ENCODE measurements at regions of chr1 and their contacts with region 1.

Region 1: DNA sequence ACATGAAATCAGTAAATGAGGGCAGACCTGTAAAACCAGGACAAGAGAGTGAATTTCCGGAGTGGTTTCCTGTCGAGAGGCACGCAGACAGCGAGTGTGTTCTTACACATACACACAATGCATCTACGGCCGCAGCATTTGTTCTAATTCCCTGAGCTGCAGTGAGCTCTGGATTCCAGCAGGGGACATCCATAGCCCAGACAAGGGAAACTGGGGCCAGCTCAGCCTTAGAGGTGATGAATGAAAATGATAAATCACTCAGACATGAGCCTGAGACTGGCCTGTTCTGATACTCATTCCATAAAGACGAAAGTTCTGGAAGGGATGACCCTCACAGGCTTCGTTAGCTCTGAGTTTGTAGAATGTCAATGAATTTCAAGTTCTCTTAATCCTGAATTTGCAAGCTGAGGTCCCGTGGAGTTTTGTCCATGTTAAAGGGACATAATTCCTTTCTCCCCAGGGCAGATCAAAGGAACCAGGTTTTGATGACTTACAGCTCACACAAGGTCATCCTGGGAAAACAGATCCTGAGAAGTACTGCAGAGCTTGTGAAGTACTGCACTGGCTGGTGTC is 207.9 kb upstream of the C1orf87 start:
- DNase-seq: peak; percentile 79
- H3K4me3 ChIP-seq: peak overlapping the region in 1 of 2 experiments; percentile 24; a peak in 1 of 4 replicates
- H3K27ac ChIP-seq: peak overlapping the region; percentile 61 to 98; a peak in 3 of 4 replicates
- H3K4me1 ChIP-seq: peaks cover 20 to 21% of the 10 kb centered on the region in 2 experiments
- H3K27me3 ChIP-seq: no peaks in the 10 kb centered on the region
- CTCF ChIP-seq: peak; percentile 92
- EP300 ChIP-seq: peak; percentile 17 to 64; a peak in 3 of 4 replicates
- RAD21 ChIP-seq: peak; percentile 98

Region 2: GRCh38 chr1:60156371-60156770 is 125.1 kb before region 1 on chr1:
- CTCF ChIA-PET with region 1: interaction called, 26 read pairs
- POLR2A ChIA-PET with region 1: no interaction called
- DNase-seq: no peak
- H3K4me3 ChIP-seq: no peak overlapping the region
- H3K27ac ChIP-seq: no peak overlapping the region
- H3K4me1 ChIP-seq: peaks cover 0 to 3% of the 10 kb centered on the region in 2 experiments; a peak in 2 of 4 replicates
- H3K27me3 ChIP-seq: no peaks in the 10 kb centered on the region
- CTCF ChIP-seq: no peak
- EP300 ChIP-seq: no peak
- RAD21 ChIP-seq: no peak

Region 3: GRCh38 chr1:60510162-60510561 is 228.7 kb after region 1 on chr1:
- CTCF ChIA-PET with region 1: no interaction called
- POLR2A ChIA-PET with region 1: no interaction called
- DNase-seq: no peak
- H3K4me3 ChIP-seq: no peak overlapping the region
- H3K27ac ChIP-seq: no peak overlapping the region
- H3K4me1 ChIP-seq: no peaks in the 10 kb centered on the region
- H3K27me3 ChIP-seq: no peaks in the 10 kb centered on the region
- CTCF ChIP-seq: no peak
- EP300 ChIP-seq: no peak
- RAD21 ChIP-seq: no peak

Region 4: GRCh38 chr1:60564916-60565750 is 283.7 kb after region 1 on chr1:
- CTCF ChIA-PET with region 1: interaction called, 18 read pairs
- POLR2A ChIA-PET with region 1: no interaction called
- DNase-seq: no peak
- H3K4me3 ChIP-seq: no peak overlapping the region
- H3K27ac ChIP-seq: peak overlapping the region in 1 of 2 experiments; percentile 83; a peak in 2 of 4 replicates
- H3K4me1 ChIP-seq: peaks cover 0 to 6% of the 10 kb centered on the region in 2 experiments; a peak in 2 of 4 replicates
- H3K27me3 ChIP-seq: no peaks in the 10 kb centered on the region
- CTCF ChIP-seq: no peak
- EP300 ChIP-seq: no peak
- RAD21 ChIP-seq: peak; percentile 65

Region 5: GRCh38 chr1:60765204-60765603 is 483.8 kb after region 1 on chr1:
- CTCF ChIA-PET with region 1: interaction called, 24 read pairs
- POLR2A ChIA-PET with region 1: interaction called, 6 read pairs
- DNase-seq: peak; percentile 32
- H3K4me3 ChIP-seq: no peak overlapping the region; a peak in 1 of 4 replicates
- H3K27ac ChIP-seq: no peak overlapping the region
- H3K4me1 ChIP-seq: peaks cover 0 to 3% of the 10 kb centered on the region in 2 experiments; a peak in 2 of 4 replicates
- H3K27me3 ChIP-seq: no peaks in the 10 kb centered on the region
- CTCF ChIP-seq: peak; percentile 64
- EP300 ChIP-seq: no peak
- RAD21 ChIP-seq: peak; percentile 82

Region 6: DNA sequence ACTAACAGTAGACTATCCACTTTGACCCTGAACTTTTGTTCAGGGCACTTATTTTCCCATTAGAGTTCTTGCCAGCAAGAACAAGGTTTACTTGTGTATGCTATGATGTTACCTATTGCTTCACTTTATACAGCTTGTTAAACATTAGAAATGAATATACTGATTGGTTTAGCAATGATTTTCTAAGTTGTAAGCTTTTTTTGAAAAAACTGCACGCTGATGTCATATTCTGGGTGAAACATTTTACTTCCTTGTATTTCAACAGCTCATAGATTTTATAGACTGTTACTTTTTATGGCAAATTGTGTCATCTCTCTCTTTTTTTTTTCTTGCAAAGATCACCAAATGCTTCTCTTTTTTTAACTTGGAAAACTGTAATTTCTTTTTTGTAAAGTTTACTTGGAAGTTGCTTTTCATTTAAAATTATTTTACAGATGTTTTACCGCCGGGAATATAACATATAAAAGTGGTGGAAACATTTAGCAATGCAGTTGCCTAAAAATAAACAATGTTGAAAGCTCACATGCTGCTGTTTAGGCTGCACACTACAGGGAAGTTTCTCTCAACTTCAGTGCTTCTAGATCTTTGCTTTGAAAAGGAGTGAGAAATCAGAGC is 585.6 kb after region 1 on chr1:
- CTCF ChIA-PET with region 1: interaction called, 9 read pairs
- POLR2A ChIA-PET with region 1: interaction called, 14 read pairs
- DNase-seq: no peak
- H3K4me3 ChIP-seq: peak overlapping the region in 1 of 2 experiments; percentile 41; a peak in 3 of 4 replicates
- H3K27ac ChIP-seq: peak overlapping the region; percentile 16 to 99; a peak in 3 of 4 replicates
- H3K4me1 ChIP-seq: peaks cover 6 to 37% of the 10 kb centered on the region in 2 experiments; a peak in 3 of 4 replicates
- H3K27me3 ChIP-seq: no peaks in the 10 kb centered on the region
- CTCF ChIP-seq: no peak
- EP300 ChIP-seq: no peak
- RAD21 ChIP-seq: no peak